CD8-positive, alpha-beta T cell (primary cell): ENCODE measurements at regions of chr5 and their contacts with region 1.

Region 1: DNA sequence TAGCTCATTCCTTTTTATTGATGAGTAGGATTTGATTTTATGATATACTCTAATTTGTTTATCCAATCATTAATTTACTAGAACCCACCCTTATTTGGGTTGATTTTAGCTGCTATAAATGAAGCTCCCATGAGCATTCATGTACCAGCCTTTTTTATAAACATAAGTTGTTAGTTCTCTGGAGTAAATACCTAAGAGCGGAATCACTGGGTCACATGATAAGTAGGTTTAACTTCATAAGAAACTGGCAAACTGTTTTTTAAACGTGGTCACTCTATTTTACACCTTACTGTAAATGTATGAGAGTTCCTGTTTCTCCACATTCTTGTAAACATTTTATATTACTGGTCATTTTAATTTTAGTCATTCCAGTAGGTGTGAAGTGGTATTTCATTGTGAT is 364.6 kb downstream of the NPR3 start:
- DNase-seq: no peak
- ATAC-seq: no peak
- H3K4me3 ChIP-seq: no peak overlapping the region
- H3K4me3 Mint-ChIP-seq: no peak overlapping the region
- H3K27ac ChIP-seq: no peak overlapping the region
- H3K27ac Mint-ChIP-seq: no peak overlapping the region
- H3K4me1 ChIP-seq: no peaks in the 10 kb centered on the region
- H3K4me1 Mint-ChIP-seq: no peaks in the 10 kb centered on the region
- H3K27me3 ChIP-seq: no peaks in the 10 kb centered on the region
- H3K27me3 Mint-ChIP-seq: no peaks in the 10 kb centered on the region
- CTCF ChIP-seq: no peak

Region 2: DNA sequence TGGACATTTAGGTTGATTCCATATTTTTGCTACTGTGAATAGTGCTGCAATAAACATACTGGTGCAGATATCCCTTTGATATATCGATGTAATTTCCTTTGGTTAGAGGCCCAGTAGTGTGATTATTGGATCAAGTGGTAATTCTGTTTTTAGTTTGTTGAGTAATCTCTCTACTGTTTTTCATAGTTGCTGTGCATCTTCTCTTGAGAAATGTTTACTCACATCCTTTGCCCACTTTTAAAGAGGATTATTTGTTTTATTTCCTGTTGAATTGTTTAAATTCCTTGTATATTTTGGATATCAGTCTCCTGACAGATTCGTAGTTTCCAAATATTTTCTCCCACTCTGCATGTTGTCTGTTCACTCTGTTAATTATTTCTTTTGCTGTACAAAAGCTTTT is 12.4 kb after region 1 on chr5:
- CTCF ChIA-PET with region 1: no interaction called
- POLR2A ChIA-PET with region 1: no interaction called
- intact Hi-C with region 1: loop called in 1 of 2 experiments (anchors 1 kb)
- DNase-seq: no peak
- ATAC-seq: no peak
- H3K4me3 ChIP-seq: no peak overlapping the region
- H3K4me3 Mint-ChIP-seq: no peak overlapping the region
- H3K27ac ChIP-seq: no peak overlapping the region
- H3K27ac Mint-ChIP-seq: no peak overlapping the region
- H3K4me1 ChIP-seq: no peaks in the 10 kb centered on the region
- H3K4me1 Mint-ChIP-seq: no peaks in the 10 kb centered on the region
- H3K27me3 ChIP-seq: no peaks in the 10 kb centered on the region
- H3K27me3 Mint-ChIP-seq: no peaks in the 10 kb centered on the region
- CTCF ChIP-seq: no peak